ENCODE measurements at regions of chr3 and their contacts with region 1.

Region 1: DNA sequence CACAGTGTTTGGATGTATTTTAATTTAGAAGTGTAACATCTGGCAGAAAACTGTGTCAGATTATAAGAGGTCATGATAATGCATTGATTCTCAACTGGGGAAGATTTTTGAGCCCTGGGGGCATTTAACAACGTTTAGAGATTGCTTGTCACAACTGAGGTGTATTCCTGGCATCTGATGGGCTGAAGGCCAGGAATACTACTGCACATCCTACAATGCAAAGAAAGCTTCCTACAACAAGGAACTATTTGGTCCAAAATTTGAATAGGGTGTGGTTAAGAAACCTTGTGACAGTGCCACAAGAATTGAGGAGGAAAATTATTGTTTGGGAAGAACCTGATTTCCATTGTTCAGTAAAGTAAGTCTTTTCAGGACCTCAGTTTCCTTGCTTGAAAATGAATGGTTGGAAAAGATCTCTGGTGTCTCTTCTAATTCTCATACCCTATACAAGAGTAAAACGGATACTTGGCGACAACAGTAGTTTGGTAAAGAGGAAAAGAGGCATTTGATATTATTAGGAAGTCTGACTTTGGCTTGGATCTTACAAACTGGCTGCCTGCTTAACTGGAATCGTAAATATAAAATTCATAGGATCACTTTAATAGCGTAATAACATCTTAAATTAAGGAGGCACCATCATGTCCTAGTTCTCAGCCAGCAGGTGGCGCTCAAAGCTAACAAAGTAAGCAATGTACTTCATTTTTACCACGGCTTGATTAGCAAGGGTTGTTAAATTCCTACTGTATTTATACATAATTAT is 4.3 kb downstream of the DAZL start:
- DNase-seq: peak; percentile 83
- H3K4me3 ChIP-seq: no peak overlapping the region
- H3K27ac ChIP-seq: no peak overlapping the region
- H3K4me1 ChIP-seq: peaks cover 0 to 4% (median 0%) of the 10 kb centered on the region in 4 donors
- H3K27me3 ChIP-seq: no peaks in the 10 kb centered on the region
- CTCF ChIP-seq: peak; percentile 85 to 92 (median 86)
- EP300 ChIP-seq: no peak
- POLR2A ChIP-seq: no peak

Region 2: DNA sequence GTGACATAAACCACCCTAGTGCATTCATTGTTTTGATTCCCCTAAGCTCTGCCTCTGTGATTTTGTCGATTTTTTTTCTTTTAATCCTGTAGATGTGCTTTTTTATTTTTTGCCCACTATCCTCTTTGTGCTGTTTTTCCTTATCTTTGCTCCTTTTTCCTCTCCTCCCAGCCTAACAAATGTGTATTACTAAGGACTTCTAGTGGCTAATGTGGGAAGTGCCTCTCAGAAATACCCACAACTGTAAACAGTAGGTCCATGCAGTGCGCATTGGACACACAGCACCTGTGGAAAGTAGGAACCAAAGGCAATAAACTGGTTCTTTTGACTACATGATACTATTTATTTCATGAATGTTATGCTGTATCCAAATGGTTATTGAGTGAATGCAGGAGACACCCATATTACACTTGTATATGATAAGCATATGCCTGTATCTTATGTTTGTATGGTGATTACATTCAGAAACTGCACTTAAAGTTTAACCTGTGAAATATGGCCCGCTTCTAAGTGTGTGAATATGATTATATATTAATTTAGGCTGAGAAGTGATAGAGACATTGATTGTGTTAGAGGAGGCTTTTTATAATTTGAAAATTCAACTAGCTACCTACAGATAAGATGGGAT is 431.6 kb after region 1 on chr3:
- in situ Hi-C with region 1: loop called in 1 of 4 experiments (anchors 25 kb)
- intact Hi-C with region 1: no loop called
- DNase-seq: no peak
- H3K4me3 ChIP-seq: no peak overlapping the region
- H3K27ac ChIP-seq: no peak overlapping the region
- H3K4me1 ChIP-seq: peaks cover 0 to 20% (median 5%) of the 10 kb centered on the region in 4 donors
- H3K27me3 ChIP-seq: no peaks in the 10 kb centered on the region
- CTCF ChIP-seq: peak; percentile 50 to 72 (median 64)
- EP300 ChIP-seq: no peak
- POLR2A ChIP-seq: no peak

Region 3: DNA sequence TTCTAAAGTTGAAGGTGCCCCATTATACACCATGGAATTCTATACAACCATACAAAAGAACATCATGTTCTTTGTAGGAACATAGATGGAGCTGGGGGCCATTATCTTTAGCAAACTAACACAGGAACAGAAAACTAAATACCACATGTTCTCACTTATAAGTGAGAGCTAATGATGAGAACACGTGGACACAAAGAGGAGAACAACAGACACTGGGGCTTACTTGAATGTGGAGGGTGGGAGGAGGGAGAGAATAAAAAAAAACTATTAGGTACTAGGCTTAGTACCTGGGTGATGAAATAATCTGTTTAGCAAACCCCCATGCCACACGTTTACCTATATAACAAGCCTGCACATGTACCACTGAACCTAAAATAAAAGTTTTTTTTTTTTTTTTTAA is 626.5 kb after region 1 on chr3:
- in situ Hi-C with region 1: loop called (anchors 5 to 25 kb)
- intact Hi-C with region 1: no loop called
- DNase-seq: no peak
- H3K4me3 ChIP-seq: no peak overlapping the region
- H3K27ac ChIP-seq: no peak overlapping the region
- H3K4me1 ChIP-seq: no peaks in the 10 kb centered on the region
- H3K27me3 ChIP-seq: no peaks in the 10 kb centered on the region
- CTCF ChIP-seq: no peak
- EP300 ChIP-seq: no peak
- POLR2A ChIP-seq: no peak

Region 4: GRCh38 chr3:17233398-17233800 is 632.4 kb after region 1 on chr3:
- in situ Hi-C with region 1: loop called (anchors 5 to 25 kb)
- intact Hi-C with region 1: no loop called
- DNase-seq: no peak
- H3K4me3 ChIP-seq: no peak overlapping the region
- H3K27ac ChIP-seq: no peak overlapping the region
- H3K4me1 ChIP-seq: no peaks in the 10 kb centered on the region
- H3K27me3 ChIP-seq: no peaks in the 10 kb centered on the region
- CTCF ChIP-seq: peak; percentile 42 to 74 (median 63)
- EP300 ChIP-seq: no peak
- POLR2A ChIP-seq: no peak

Region 5: DNA sequence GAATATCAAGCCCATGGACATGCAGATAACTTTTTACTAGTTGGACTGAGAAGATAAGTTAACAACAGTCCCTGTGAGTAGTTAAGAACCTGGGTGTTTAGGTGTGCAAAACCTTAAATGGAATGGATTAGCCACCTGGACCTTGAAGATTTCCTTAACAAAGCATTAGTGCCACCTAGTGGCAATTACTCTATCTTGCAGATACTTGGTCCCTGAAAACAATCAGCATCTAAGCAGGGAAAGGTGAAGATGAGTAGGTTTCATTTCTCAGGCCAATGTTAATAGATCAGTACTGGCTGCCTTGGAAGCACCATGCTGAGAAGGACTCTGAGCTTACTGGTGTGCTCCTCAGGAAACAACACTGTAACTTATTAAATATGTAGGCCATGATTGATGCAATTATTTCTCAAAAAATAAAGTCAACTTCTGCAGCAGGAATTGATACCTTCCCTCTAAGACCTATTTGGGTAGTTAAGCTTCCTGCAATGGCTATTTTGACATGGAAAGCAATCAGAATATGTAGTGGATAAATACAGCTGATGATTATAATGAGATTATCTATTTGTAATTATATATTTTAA is 812.1 kb after region 1 on chr3:
- in situ Hi-C with region 1: loop called (anchors 10 to 25 kb)
- intact Hi-C with region 1: no loop called
- DNase-seq: no peak
- H3K4me3 ChIP-seq: no peak overlapping the region
- H3K27ac ChIP-seq: no peak overlapping the region
- H3K4me1 ChIP-seq: no peaks in the 10 kb centered on the region
- H3K27me3 ChIP-seq: no peaks in the 10 kb centered on the region
- CTCF ChIP-seq: peak; percentile 60 to 72 (median 69)
- EP300 ChIP-seq: no peak
- POLR2A ChIP-seq: no peak

Region 6: DNA sequence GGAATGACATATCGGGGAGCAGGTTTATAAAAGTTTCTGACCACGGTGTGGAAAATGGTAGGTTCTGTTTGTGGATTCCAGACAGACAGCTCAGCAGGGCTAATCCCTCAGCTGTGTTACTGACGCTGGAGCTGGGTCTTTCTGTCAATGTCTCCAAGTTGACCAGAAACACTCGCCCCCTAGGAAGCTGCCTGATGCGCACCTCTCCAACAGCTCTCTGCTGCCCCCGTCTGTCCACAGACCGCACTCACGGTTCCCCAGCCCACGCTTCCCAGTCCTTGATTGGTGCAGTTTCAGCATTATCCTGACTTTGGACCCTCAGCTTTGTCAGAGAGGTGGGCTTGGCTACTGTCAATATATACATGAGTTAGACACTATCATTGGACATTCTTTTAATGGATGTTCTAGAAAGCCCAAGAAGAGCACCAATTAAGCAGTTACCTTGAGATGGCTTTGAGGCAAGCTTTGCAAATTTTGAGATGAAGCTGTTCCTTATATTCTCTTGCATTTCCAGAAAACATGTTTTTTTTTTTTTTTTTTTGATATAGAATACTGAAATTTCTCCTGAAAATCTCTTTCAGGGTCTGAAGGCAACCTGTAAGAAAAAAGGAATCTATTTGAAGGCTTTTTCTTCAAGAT is 1240.3 kb after region 1 on chr3:
- in situ Hi-C with region 1: loop called in 2 of 4 experiments (anchors 25 kb)
- intact Hi-C with region 1: no loop called
- DNase-seq: peak; percentile 73
- H3K4me3 ChIP-seq: no peak overlapping the region
- H3K27ac ChIP-seq: no peak overlapping the region
- H3K4me1 ChIP-seq: no peaks in the 10 kb centered on the region
- H3K27me3 ChIP-seq: no peaks in the 10 kb centered on the region
- CTCF ChIP-seq: peak; percentile 86 to 95 (median 92)
- EP300 ChIP-seq: no peak
- POLR2A ChIP-seq: no peak